ENCODE measurements at regions of chr7 and their contacts with region 1.

Region 1: GRCh38 chr7:3092468-3092867 is 48.8 kb upstream of the CARD11 start:
- DNase-seq: peak; percentile 94
- ATAC-seq: peak; percentile 81
- H3K4me3 Mint-ChIP-seq: peak overlapping the region; percentile 26
- H3K27ac Mint-ChIP-seq: peak overlapping the region; percentile 90
- H3K4me1 Mint-ChIP-seq: peaks cover 69% of the 10 kb centered on the region
- H3K27me3 Mint-ChIP-seq: no peaks in the 10 kb centered on the region

Region 2: DNA sequence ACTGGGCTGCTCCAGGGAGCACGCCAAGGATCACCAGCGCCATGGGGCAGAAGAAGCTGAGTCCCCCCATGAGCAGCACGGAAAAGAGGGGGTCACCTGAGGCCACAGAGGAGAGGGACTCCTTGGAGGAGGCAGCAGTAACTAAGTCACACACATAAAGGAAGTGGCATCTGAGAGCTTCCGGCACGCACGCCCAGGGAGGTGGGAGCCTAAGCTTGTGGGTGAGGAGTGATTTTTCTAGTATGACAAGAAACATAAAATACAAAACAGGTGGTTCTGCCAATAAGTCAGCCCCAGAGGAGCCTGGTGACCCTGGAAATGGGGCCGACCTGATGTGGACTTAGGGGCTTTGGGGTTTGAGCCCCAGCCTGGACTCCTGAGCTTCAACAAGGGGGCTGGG is 109.6 kb before region 1 on chr7:
- CTCF ChIA-PET with region 1: no interaction called
- DNase-seq: peak; percentile 89
- ATAC-seq: peak; percentile 78
- H3K4me3 Mint-ChIP-seq: peak overlapping the region; percentile 7
- H3K27ac Mint-ChIP-seq: peak overlapping the region; percentile 82
- H3K4me1 Mint-ChIP-seq: peaks cover 77% of the 10 kb centered on the region
- H3K27me3 Mint-ChIP-seq: no peaks in the 10 kb centered on the region

Region 3: DNA sequence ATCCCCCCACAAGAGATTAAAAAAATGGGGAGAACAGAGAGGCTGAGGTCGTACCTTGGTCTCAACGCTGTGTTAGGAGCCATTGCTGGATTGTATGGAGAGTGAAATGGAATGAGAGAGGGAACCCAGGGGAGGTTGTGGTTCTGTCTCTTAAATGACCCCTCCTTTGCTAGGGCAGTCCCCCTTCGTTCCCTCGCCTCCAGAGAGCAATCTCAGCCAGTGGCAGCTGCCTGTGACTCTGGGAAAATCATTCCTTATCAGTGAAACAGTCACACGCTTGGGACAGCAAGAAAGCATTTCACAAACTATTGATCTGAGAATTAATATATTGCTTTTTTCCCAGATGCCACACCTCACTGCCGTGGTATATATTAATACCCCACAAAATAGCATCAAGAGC is 36.8 kb before region 1 on chr7:
- CTCF ChIA-PET with region 1: no interaction called
- DNase-seq: no peak
- ATAC-seq: no peak
- H3K4me3 Mint-ChIP-seq: no peak overlapping the region
- H3K27ac Mint-ChIP-seq: no peak overlapping the region
- H3K4me1 Mint-ChIP-seq: peaks cover 4% of the 10 kb centered on the region
- H3K27me3 Mint-ChIP-seq: peaks cover 17% of the 10 kb centered on the region

Region 4: DNA sequence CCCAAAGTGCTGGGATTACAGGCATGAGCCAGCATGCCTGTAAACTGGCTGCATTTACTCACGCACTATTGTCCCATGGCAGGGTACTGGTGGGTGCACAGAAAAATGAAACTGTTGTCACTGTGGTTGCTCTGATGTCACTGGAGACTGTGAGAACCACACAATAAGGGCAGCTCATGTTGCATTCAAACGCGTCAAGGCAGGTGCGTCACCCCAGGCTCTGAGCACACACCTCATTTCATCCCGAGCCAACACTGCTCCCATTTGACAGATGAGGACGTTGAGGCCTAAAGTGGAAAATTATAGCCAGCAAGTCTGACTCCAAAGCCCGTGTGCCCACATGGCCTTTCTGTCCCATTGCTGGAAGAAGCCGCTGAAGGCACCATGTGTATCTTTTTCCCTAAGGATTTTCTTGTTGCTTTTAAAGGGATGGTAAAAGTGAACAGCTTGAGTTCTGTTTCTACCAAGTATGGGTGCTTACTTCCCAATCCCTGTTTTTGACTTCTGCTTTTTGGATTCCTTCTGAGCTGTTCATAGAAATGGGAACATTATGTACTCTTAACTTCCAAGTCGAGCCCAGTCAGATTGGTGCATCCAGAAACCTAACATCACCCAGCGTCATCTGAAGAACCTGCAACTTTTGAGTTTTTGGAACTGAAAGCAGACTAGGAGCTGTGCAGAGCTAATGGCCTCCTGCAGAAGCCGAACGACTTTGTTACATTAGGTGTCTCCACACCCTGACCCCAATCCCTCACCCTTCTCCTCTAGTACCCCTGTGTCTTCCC is 11.3 kb after region 1 on chr7:
- CTCF ChIA-PET with region 1: interaction called, 59 read pairs
- DNase-seq: peak; percentile 69
- ATAC-seq: peak; percentile 31
- H3K4me3 Mint-ChIP-seq: no peak overlapping the region
- H3K27ac Mint-ChIP-seq: peak overlapping the region; percentile 97
- H3K4me1 Mint-ChIP-seq: peaks cover 72% of the 10 kb centered on the region
- H3K27me3 Mint-ChIP-seq: no peaks in the 10 kb centered on the region

Region 5: DNA sequence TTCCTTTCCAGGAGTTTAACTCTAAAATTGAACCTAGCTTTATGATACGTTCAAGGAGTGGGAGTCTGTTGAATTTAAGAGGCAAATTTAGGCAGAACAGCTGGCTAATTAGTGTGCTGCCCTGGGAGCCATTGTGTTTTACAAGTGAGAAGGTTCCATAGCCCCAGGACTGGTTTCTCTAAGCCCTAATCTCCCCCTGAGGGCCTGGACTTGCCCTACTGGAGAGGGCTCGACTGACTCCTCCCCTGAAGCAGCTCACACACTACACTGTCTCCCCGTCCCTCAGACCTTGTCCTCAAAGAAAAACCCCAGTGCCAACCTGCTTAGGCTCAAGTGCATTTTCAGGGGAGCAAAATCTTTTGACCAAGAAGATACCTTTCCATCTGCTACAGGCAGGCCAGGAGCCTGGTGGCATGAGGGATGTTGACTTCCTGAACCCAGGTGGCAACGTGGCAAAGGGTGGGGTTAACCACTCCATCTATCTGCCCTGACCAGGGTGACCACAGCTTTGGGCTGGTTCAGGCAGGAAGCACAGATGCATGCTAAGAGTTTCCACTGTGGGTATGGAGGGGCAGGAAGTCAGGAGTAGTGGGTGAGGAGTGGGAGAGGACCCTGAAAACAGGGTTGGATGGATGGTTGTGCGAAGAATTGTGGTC is 20.1 kb after region 1 on chr7:
- CTCF ChIA-PET with region 1: interaction called, 59 read pairs
- DNase-seq: peak; percentile 89
- ATAC-seq: peak; percentile 73
- H3K4me3 Mint-ChIP-seq: peak overlapping the region; percentile 10
- H3K27ac Mint-ChIP-seq: peak overlapping the region; percentile 81
- H3K4me1 Mint-ChIP-seq: peaks cover 93% of the 10 kb centered on the region
- H3K27me3 Mint-ChIP-seq: no peaks in the 10 kb centered on the region

Region 6: DNA sequence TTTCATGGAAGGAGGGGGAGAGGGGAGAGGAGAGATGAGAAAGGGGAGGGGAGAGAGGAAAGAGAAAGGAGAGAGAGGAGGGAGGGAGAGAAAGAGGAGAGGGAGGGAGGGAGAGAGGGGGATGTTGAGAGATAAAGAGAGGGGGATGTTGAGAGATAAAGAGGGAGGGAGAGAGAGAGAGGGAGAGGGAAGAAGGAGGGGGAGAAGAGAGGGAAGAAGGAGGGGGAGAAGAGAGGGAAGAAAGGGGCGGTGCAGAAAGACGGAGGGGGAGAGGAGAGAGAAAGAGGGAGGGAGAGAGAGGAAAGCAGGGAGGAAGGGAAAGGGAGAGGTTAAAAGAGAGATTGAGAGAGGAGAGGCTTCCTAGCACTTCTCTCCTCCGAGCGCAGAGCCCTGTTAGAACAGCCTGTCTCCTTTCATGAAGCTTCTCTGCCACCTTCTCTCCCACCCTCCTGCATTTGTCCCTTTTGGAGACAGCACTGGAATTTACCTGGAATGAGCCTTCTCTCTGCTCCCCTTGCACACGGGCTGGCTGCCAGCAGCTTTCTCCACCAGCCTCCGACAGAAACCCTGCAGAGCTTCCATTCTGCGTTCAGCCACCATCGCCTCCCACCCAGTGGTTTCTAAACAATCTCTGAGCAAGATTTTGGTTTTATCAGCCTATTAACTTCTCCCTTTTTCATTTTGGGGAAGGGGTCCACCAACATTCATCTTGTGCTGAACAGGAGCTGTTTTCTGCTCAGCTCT is 25.2 kb after region 1 on chr7:
- CTCF ChIA-PET with region 1: interaction called, 12 read pairs
- DNase-seq: peak; percentile 67
- ATAC-seq: peak; percentile 41
- H3K4me3 Mint-ChIP-seq: peak overlapping the region; percentile 81
- H3K27ac Mint-ChIP-seq: peak overlapping the region; percentile 93
- H3K4me1 Mint-ChIP-seq: peaks cover 81% of the 10 kb centered on the region
- H3K27me3 Mint-ChIP-seq: no peaks in the 10 kb centered on the region

Region 7: DNA sequence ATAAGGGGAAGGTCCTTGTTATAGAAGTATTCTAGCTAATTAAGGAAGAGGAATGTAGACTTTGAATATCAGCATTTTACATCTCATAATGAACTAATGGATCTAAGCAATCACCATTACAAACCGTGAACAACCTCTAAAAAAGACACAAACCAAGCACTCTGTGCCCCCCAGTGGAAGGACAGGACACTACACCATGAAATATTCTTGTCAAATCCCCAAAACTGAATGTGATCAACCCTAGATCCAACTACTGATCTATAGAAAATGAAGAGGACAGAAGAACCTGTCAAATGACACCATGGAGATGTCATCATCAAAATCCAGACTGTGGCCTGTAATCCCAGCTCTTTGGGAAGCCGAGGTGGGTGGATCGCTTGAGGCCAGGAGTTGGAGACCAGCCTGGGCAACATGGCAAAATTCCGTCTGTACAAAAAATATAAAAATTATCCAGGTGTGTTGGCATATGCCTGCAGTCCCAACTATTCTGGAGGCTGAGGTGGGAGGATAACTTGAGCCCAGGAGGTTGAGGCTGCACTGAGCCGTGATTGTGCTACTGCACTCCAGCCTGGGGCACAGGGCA is 62.5 kb after region 1 on chr7:
- CTCF ChIA-PET with region 1: interaction called, 37 read pairs
- DNase-seq: peak; percentile 79
- ATAC-seq: peak; percentile 83
- H3K4me3 Mint-ChIP-seq: no peak overlapping the region
- H3K27ac Mint-ChIP-seq: peak overlapping the region; percentile 22
- H3K4me1 Mint-ChIP-seq: peaks cover 31% of the 10 kb centered on the region
- H3K27me3 Mint-ChIP-seq: peaks cover 7% of the 10 kb centered on the region